Naive thymus-derived CD4-positive, alpha-beta T cell (primary cell): ENCODE measurements at regions of chr3 and their contacts with region 1.

Region 1: GRCh38 chr3:189363590-189364255 is 192.0 kb downstream of the TPRG1 start:
- DNase-seq: no peak
- ATAC-seq: no peak
- H3K4me3 ChIP-seq: no peak overlapping the region
- H3K4me3 Mint-ChIP-seq: no peak overlapping the region
- H3K27ac ChIP-seq: no peak overlapping the region
- H3K27ac Mint-ChIP-seq: no peak overlapping the region
- H3K4me1 ChIP-seq: no peaks in the 10 kb centered on the region
- H3K4me1 Mint-ChIP-seq: peaks cover 0 to 22% (median 12%) of the 10 kb centered on the region in 7 donors
- H3K27me3 ChIP-seq: no peaks in the 10 kb centered on the region
- H3K27me3 Mint-ChIP-seq: no peaks in the 10 kb centered on the region

Region 2: GRCh38 chr3:189249987-189250386 is 113.7 kb before region 1 on chr3:
- CTCF ChIA-PET with region 1: no interaction called
- POLR2A ChIA-PET with region 1: no interaction called
- intact Hi-C with region 1: no loop called
- DNase-seq: no peak
- ATAC-seq: no peak
- H3K4me3 ChIP-seq: no peak overlapping the region
- H3K4me3 Mint-ChIP-seq: no peak overlapping the region
- H3K27ac ChIP-seq: no peak overlapping the region
- H3K27ac Mint-ChIP-seq: peak overlapping the region in 1 of 9 donors; percentile 17
- H3K4me1 ChIP-seq: no peaks in the 10 kb centered on the region
- H3K4me1 Mint-ChIP-seq: peaks cover 0 to 1% (median 0%) of the 10 kb centered on the region in 7 donors
- H3K27me3 ChIP-seq: no peaks in the 10 kb centered on the region
- H3K27me3 Mint-ChIP-seq: peaks cover 0 to 18% (median 0%) of the 10 kb centered on the region in 5 donors

Region 3: DNA sequence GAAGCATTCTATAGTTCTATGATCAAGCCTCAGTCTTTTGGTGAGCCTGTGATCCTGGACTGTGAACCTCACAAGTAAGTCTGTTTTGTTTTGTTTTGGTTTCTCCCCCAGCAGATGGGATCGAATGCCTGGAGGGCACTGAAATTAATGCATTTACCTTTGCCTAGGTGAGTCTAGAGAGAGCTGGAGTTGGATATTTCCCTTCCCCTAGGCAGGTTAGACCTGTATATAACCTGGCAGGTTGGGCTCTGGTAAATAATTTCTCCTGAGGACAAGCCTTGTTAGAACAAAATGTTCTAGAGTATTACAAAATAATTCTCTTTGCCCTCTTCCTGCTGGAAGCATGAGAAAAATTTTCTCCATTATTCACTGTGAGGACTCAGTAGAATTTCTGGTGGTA is 19.9 kb after region 1 on chr3:
- CTCF ChIA-PET with region 1: no interaction called
- POLR2A ChIA-PET with region 1: no interaction called
- intact Hi-C with region 1: loop called in 1 of 2 experiments (anchors 2 kb)
- DNase-seq: no peak
- ATAC-seq: no peak
- H3K4me3 ChIP-seq: no peak overlapping the region
- H3K4me3 Mint-ChIP-seq: no peak overlapping the region
- H3K27ac ChIP-seq: no peak overlapping the region
- H3K27ac Mint-ChIP-seq: no peak overlapping the region
- H3K4me1 ChIP-seq: no peaks in the 10 kb centered on the region
- H3K4me1 Mint-ChIP-seq: peaks cover 0 to 7% (median 2%) of the 10 kb centered on the region in 7 donors
- H3K27me3 ChIP-seq: no peaks in the 10 kb centered on the region
- H3K27me3 Mint-ChIP-seq: no peaks in the 10 kb centered on the region

Region 4: GRCh38 chr3:191235331-191236314 is 1871.9 kb after region 1 on chr3:
- CTCF ChIA-PET with region 1: no interaction called
- POLR2A ChIA-PET with region 1: no interaction called
- intact Hi-C with region 1: no loop called
- DNase-seq: no peak
- ATAC-seq: no peak
- H3K4me3 ChIP-seq: no peak overlapping the region
- H3K4me3 Mint-ChIP-seq: no peak overlapping the region
- H3K27ac ChIP-seq: no peak overlapping the region
- H3K27ac Mint-ChIP-seq: no peak overlapping the region
- H3K4me1 ChIP-seq: no peaks in the 10 kb centered on the region
- H3K4me1 Mint-ChIP-seq: peaks cover 0 to 2% (median 0%) of the 10 kb centered on the region in 7 donors
- H3K27me3 ChIP-seq: no peaks in the 10 kb centered on the region
- H3K27me3 Mint-ChIP-seq: peaks cover 0 to 3% (median 0%) of the 10 kb centered on the region in 5 donors